ENCODE measurements at regions of chr15 and their contacts with region 1.

Region 1: DNA sequence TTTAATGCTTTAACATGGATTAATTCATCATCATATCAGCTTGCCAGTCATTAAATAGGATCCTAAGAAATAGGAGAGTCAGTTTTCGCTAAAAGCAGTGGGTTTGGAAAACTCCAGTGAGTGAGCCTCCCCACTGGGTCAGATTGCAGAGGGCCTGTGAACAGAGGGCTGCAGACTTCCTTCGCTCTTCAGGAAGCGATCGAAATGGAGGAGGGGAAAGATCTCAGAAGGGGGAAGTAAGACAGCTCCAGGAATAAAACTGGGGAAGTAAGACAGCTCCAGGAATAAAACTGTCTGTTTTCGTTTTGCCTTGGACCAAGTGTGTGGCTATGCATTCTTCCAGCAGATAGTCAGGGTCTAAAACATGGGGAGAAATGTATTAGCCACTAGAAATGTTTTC is 124.8 kb upstream of the C15orf61 start:
- DNase-seq: no peak
- ATAC-seq: no peak
- H3K4me3 ChIP-seq: no peak overlapping the region
- H3K27ac ChIP-seq: no peak overlapping the region
- H3K4me1 ChIP-seq: no peaks in the 10 kb centered on the region
- CTCF ChIP-seq: no peak
- EP300 ChIP-seq: no peak
- POLR2A ChIP-seq: no peak
- RAD21 ChIP-seq: no peak

Region 2: DNA sequence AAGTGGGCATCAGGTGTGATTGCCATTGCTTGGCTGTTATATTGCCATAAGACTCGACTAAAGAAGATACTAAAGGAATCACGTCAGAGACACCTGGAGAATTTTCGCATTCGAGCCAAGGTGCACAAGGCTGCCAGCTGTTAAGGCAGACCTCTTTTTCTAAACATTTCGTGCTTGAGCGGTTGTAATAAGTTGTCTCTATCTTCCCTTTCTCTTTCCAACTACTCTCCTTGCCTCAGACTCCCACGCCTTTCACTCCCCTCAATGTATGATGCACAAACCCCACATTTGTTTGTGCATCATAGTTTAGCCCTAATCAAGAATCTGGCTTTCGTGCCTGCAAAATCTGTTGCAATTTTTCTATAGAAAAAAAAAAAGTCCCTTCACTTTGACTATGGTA is 23.6 kb before region 1 on chr15:
- CTCF ChIA-PET with region 1: no interaction called
- POLR2A ChIA-PET with region 1: no interaction called
- DNase-seq: no peak
- ATAC-seq: no peak
- H3K4me3 ChIP-seq: no peak overlapping the region
- H3K27ac ChIP-seq: no peak overlapping the region
- H3K4me1 ChIP-seq: no peaks in the 10 kb centered on the region
- CTCF ChIP-seq: no peak
- EP300 ChIP-seq: no peak
- POLR2A ChIP-seq: no peak
- RAD21 ChIP-seq: no peak

Region 3: GRCh38 chr15:67383899-67384298 is 12.2 kb before region 1 on chr15:
- CTCF ChIA-PET with region 1: interaction called, 14 read pairs
- POLR2A ChIA-PET with region 1: no interaction called
- DNase-seq: peak in 1 of 2 experiments; percentile 35
- ATAC-seq: no peak
- H3K4me3 ChIP-seq: no peak overlapping the region
- H3K27ac ChIP-seq: no peak overlapping the region
- H3K4me1 ChIP-seq: no peaks in the 10 kb centered on the region
- CTCF ChIP-seq: peak; percentile 29; the same call in 2 of the 3 replicates
- EP300 ChIP-seq: no peak
- POLR2A ChIP-seq: no peak
- RAD21 ChIP-seq: peak; percentile 46 to 61; a peak in 3 of 5 replicates

Measured in A549 (cell line).